Endothelial cell of umbilical vein (primary cell): ENCODE measurements at regions of chr14 and their contacts with region 1.

Region 1: DNA sequence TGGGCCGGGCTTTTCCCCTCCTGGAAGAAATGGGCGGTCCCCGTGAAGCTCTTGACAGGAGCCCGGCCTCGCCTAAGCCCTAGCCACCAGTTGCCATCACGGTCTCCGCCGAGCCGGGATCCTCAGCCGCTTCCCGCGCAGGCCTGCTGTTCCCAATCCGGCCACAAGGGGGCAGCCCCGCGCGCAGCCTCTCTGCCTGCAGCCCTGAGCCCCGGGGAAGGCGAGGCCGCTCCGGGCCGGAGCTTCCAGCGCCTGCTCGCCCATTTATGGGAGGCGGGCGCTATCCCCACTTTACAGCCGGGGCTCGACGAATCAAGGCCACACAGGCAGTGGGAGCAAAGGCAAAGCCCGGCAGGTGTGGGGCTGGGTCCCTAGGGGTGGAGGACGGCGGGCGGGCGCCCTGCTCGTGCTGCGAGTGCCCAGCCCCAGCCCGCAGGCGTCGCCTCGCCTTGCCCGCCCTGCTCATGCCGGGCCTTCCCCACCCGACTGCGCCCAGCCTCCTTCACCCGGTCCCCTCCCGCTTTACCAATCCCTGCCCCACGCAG is 61.5 kb downstream of the LGMN start:
- DNase-seq: peak; percentile 71
- H3K4me3 ChIP-seq: peak overlapping the region in 1 of 3 experiments; percentile 33
- H3K27ac ChIP-seq: no peak overlapping the region
- H3K4me1 ChIP-seq: no peaks in the 10 kb centered on the region
- H3K27me3 ChIP-seq: no peaks in the 10 kb centered on the region
- CTCF ChIP-seq: peak; percentile 98 to 99
- POLR2A ChIP-seq: no peak

Region 2: DNA sequence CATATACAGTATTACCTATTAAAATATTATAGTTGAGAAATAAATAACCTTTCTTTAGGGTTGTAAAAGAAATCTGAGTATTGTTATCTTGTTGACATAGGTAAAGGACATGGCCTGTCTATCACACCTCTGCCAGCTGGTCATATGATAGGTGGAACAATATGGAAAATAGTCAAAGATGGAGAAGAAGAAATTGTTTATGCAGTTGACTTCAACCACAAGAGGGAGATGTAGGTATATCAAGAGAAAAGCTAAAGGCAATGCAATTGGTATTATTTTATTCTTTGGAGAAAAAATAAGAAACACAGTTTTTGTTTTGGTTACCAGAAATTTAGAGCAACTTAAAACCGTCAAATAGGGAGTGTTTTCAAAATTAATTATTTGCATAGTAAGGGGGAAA is 551.7 kb before region 1 on chr14:
- CTCF ChIA-PET with region 1: interaction called, 24 read pairs
- POLR2A ChIA-PET with region 1: no interaction called
- dilution Hi-C with region 1: no loop called
- intact Hi-C with region 1: no loop called
- DNase-seq: peak; percentile 49
- H3K4me3 ChIP-seq: no peak overlapping the region
- H3K27ac ChIP-seq: no peak overlapping the region
- H3K4me1 ChIP-seq: no peaks in the 10 kb centered on the region
- H3K27me3 ChIP-seq: no peaks in the 10 kb centered on the region
- CTCF ChIP-seq: peak; percentile 14 to 35
- POLR2A ChIP-seq: no peak

Region 3: GRCh38 chr14:92352158-92352985 is 334.6 kb before region 1 on chr14:
- CTCF ChIA-PET with region 1: no interaction called
- POLR2A ChIA-PET with region 1: no interaction called
- dilution Hi-C with region 1: loop called (anchors 25 kb)
- intact Hi-C with region 1: no loop called
- DNase-seq: no peak
- H3K4me3 ChIP-seq: no peak overlapping the region
- H3K27ac ChIP-seq: no peak overlapping the region
- H3K4me1 ChIP-seq: no peaks in the 10 kb centered on the region
- H3K27me3 ChIP-seq: no peaks in the 10 kb centered on the region
- CTCF ChIP-seq: peak; percentile 8 to 13
- POLR2A ChIP-seq: no peak

Region 4: GRCh38 chr14:92698393-92698792 is 11.4 kb after region 1 on chr14:
- CTCF ChIA-PET with region 1: interaction called, 10 read pairs
- POLR2A ChIA-PET with region 1: no interaction called
- dilution Hi-C with region 1: no loop called
- intact Hi-C with region 1: no loop called
- DNase-seq: peak; percentile 11
- H3K4me3 ChIP-seq: no peak overlapping the region
- H3K27ac ChIP-seq: no peak overlapping the region
- H3K4me1 ChIP-seq: no peaks in the 10 kb centered on the region
- H3K27me3 ChIP-seq: peaks cover 3 to 4% of the 10 kb centered on the region in 2 experiments
- CTCF ChIP-seq: no peak
- POLR2A ChIP-seq: no peak